BJ (cell line): ENCODE measurements at regions of chr1 and their contacts with region 1.

Region 1: GRCh38 chr1:51192213-51192843 is 43.7 kb upstream of the RNF11 start:
- DNase-seq: peak; percentile 20
- H3K4me3 ChIP-seq: no peak overlapping the region
- H3K27me3 ChIP-seq: no peaks in the 10 kb centered on the region
- CTCF ChIP-seq: peak; percentile 90

Region 2: GRCh38 chr1:50873458-50874187 is 318.7 kb before region 1 on chr1:
- CTCF ChIA-PET with region 1: interaction called, 11 read pairs
- POLR2A ChIA-PET with region 1: no interaction called
- DNase-seq: peak; percentile 4
- H3K4me3 ChIP-seq: no peak overlapping the region
- H3K27me3 ChIP-seq: no peaks in the 10 kb centered on the region
- CTCF ChIP-seq: peak; percentile 51

Region 3: DNA sequence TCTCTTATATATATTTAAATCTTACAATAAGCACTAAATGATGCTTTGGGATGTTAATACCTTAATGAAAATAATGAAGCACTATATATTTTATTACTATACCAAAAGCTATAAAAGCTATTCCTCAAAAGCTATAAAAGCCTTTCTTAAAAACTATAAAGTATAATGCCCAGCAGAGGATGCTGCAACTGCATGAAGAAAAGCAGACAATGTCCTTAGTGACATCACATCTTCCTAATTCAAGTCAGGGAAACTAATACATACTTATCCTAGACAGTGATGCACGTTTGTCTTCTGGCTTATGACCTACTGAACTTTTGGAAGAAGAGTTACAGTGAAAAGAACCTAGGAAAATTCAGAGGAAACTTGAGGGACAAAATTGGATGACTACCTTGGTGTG is 103.8 kb before region 1 on chr1:
- CTCF ChIA-PET with region 1: interaction called, 10 read pairs
- POLR2A ChIA-PET with region 1: no interaction called
- DNase-seq: no peak
- H3K4me3 ChIP-seq: no peak overlapping the region
- H3K27me3 ChIP-seq: peaks cover 2% of the 10 kb centered on the region; the same call in 1 of the 2 replicates
- CTCF ChIP-seq: 0 out of 2 replicates have a peak, but pooled peaks have one; percentile 16

Region 4: GRCh38 chr1:51203121-51203873 is 11.0 kb after region 1 on chr1:
- CTCF ChIA-PET with region 1: interaction called, 22 read pairs
- POLR2A ChIA-PET with region 1: no interaction called
- DNase-seq: no peak
- H3K4me3 ChIP-seq: no peak overlapping the region
- H3K27me3 ChIP-seq: no peaks in the 10 kb centered on the region
- CTCF ChIP-seq: no peak

Region 5: GRCh38 chr1:51296383-51297357 is 104.3 kb after region 1 on chr1:
- CTCF ChIA-PET with region 1: interaction called, 25 read pairs
- POLR2A ChIA-PET with region 1: no interaction called
- DNase-seq: peak; percentile 15
- H3K4me3 ChIP-seq: peak overlapping the region; percentile 27
- H3K27me3 ChIP-seq: no peaks in the 10 kb centered on the region; the same call in 1 of the 2 replicates
- CTCF ChIP-seq: peak; percentile 99

Region 6: GRCh38 chr1:51331206-51332100 is 139.1 kb after region 1 on chr1:
- CTCF ChIA-PET with region 1: no interaction called
- POLR2A ChIA-PET with region 1: no interaction called
- DNase-seq: no peak
- H3K4me3 ChIP-seq: no peak overlapping the region
- H3K27me3 ChIP-seq: no peaks in the 10 kb centered on the region
- CTCF ChIP-seq: no peak